Activated CD4-positive, alpha-beta T cell treated with anti-CD3 and anti-CD28 coated beads for 36 hours (primary cell): ENCODE measurements at regions of chr16 and their contacts with region 1.

Region 1: GRCh38 chr16:20704281-20704680 is 6.8 kb upstream of the ACSM1 start:
- DNase-seq: no peak
- ATAC-seq: no peak
- H3K4me3 Mint-ChIP-seq: no peak overlapping the region
- H3K27ac Mint-ChIP-seq: no peak overlapping the region
- H3K4me1 Mint-ChIP-seq: no peaks in the 10 kb centered on the region
- H3K27me3 Mint-ChIP-seq: peaks cover 4% of the 10 kb centered on the region

Region 2: GRCh38 chr16:20598832-20599469 is 105.3 kb before region 1 on chr16:
- CTCF ChIA-PET with region 1: no interaction called
- POLR2A ChIA-PET with region 1: no interaction called
- intact Hi-C with region 1: loop called in 1 of 2 experiments (anchors 1 kb)
- DNase-seq: no peak
- ATAC-seq: no peak
- H3K4me3 Mint-ChIP-seq: no peak overlapping the region
- H3K27ac Mint-ChIP-seq: no peak overlapping the region
- H3K4me1 Mint-ChIP-seq: no peaks in the 10 kb centered on the region
- H3K27me3 Mint-ChIP-seq: peaks cover 14% of the 10 kb centered on the region

Region 3: GRCh38 chr16:20683812-20684211 is 20.5 kb before region 1 on chr16:
- CTCF ChIA-PET with region 1: no interaction called
- POLR2A ChIA-PET with region 1: no interaction called
- intact Hi-C with region 1: no loop called
- DNase-seq: no peak
- ATAC-seq: peak; percentile 95
- H3K4me3 Mint-ChIP-seq: no peak overlapping the region
- H3K27ac Mint-ChIP-seq: peak overlapping the region; percentile 69
- H3K4me1 Mint-ChIP-seq: peaks cover 14% of the 10 kb centered on the region
- H3K27me3 Mint-ChIP-seq: no peaks in the 10 kb centered on the region